Prostate gland (tissue), 2 donors: ENCODE measurements at regions of chr1 and their contacts with region 1.

Region 1: GRCh38 chr1:234722904-234723720 is 113.1 kb upstream of the IRF2BP2 start:
- DNase-seq: peak; percentile 63
- H3K4me3 ChIP-seq: no peak overlapping the region
- H3K27ac ChIP-seq: peak overlapping the region; percentile 95 to 97
- H3K4me1 ChIP-seq: peaks cover 47% of the 10 kb centered on the region
- H3K27me3 ChIP-seq: no peaks in the 10 kb centered on the region
- CTCF ChIP-seq: no peak
- POLR2A ChIP-seq: no peak

Region 2: DNA sequence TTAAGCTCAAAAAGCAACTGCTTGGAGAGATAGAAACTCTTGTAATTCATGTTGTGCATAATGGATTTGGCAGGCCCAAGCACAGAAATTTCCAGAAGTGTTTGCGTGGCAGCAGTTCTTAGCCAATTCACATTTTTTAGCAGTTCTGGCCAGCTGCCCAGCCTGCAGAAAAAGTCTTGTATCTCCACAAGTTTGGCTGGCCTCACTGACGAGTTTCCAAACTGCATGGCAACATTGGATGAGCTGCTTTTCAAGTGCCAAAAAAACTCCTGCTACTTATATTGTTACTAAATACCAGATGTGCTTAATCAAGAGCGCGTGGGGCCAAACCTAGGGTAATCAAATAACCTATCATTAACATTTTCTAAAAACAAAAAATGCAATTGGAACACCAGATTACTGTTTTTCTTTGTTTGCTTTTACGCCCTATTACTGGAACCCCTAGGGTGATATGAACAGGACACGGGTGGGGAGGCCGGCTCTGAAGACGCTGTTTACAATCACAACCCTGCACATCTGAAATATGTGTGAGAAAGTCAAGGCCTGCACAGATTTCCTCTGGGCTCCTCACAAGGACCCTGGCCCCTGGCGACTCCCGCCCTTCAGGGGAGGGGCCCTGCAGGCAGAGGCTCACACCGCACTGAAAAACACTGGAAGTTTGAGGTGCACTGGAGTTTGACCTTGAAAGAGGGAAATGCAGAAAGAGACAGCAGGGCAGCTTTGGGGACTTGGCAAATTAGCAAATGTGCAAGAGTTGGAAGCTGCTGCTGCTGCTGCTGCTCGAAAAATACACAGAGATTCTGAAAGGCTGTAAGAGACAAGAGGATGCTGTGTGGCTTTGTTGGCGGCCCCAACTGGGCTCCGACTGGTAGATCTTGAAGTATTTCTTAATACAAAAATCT is 188.9 kb before region 1 on chr1:
- intact Hi-C with region 1: loop called (anchors 5 kb)
- DNase-seq: peak; percentile 94
- H3K4me3 ChIP-seq: no peak overlapping the region
- H3K27ac ChIP-seq: peak overlapping the region; percentile 99 to 100
- H3K4me1 ChIP-seq: peaks cover 54% of the 10 kb centered on the region
- H3K27me3 ChIP-seq: no peaks in the 10 kb centered on the region
- CTCF ChIP-seq: no peak
- POLR2A ChIP-seq: no peak

Region 3: GRCh38 chr1:234862944-234863515 is 139.9 kb after region 1 on chr1:
- intact Hi-C with region 1: loop called (anchors 5 kb)
- DNase-seq: peak; percentile 86
- H3K4me3 ChIP-seq: no peak overlapping the region
- H3K27ac ChIP-seq: peak overlapping the region; percentile 64 to 73
- H3K4me1 ChIP-seq: peaks cover 9% of the 10 kb centered on the region
- H3K27me3 ChIP-seq: no peaks in the 10 kb centered on the region
- CTCF ChIP-seq: no peak
- POLR2A ChIP-seq: no peak

Region 4: DNA sequence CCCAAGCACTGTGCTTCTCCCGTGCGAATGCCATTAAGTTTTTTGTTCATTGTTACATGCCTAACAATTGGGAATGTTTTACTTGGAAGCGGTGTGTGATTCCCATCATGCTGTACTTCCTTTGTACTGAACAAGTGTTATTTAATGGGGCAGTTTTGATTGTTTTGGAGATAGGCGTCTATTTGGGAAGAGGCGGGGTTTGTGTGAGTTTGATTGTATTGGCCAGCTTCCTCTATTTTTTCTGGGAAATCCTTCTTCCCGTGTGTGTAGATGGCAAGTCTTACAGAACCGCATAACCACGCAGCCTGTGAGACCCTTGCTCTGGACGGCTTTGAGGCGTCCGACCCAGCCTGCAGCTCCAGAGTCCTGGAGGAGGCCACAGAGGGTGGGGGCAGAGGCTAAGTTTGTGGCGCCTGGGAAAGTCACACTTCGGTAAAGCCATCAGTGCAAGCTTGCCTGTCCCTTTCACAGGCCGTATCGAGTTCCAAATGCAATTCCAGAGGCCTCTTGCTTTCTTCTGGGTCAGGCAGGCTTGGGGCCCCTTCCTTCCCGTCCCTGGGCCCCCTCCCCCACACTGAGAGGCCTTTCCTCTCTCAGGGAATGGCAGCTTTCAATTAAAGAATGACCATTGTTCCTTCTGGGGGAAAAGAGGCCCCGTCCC is 195.2 kb after region 1 on chr1:
- intact Hi-C with region 1: loop called (anchors 2 kb)
- DNase-seq: peak; percentile 73
- H3K4me3 ChIP-seq: no peak overlapping the region
- H3K27ac ChIP-seq: peak overlapping the region; percentile 54 to 68
- H3K4me1 ChIP-seq: peaks cover 21% of the 10 kb centered on the region
- H3K27me3 ChIP-seq: no peaks in the 10 kb centered on the region
- CTCF ChIP-seq: no peak
- POLR2A ChIP-seq: no peak

Region 5: DNA sequence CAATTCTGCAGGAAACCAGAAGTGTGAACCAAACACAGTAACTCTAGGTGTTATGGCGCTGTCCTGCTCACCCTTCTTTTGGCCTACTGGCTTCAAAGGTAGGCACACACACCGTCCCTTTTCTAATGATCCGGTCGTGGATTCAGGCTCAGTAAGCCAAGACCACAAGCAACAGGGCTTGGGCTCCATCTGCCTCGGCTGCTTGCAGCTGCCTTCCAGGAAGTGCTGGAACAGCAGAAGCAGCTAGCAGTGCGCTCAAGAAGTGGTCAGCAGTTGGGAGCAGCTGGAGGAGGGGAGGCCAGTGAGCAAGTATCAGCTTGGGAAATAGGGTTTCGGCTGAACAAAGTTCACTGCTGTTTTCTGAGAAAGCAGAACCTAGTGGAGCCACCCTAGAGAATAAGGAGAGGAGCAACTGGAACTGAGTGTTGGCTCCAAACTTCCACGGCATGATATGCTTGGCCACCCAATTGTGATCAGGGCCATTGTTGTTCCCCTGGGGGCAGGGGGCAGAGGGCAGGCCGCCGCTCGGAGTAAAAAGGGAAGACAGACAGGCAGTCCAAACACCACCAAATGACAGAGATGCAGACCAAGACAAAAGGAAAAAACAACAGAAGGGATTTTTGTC is 232.1 kb after region 1 on chr1:
- intact Hi-C with region 1: no loop called
- DNase-seq: no peak
- H3K4me3 ChIP-seq: no peak overlapping the region
- H3K27ac ChIP-seq: no peak overlapping the region
- H3K4me1 ChIP-seq: peaks cover 3% of the 10 kb centered on the region
- H3K27me3 ChIP-seq: no peaks in the 10 kb centered on the region
- CTCF ChIP-seq: no peak
- POLR2A ChIP-seq: no peak

Region 6: DNA sequence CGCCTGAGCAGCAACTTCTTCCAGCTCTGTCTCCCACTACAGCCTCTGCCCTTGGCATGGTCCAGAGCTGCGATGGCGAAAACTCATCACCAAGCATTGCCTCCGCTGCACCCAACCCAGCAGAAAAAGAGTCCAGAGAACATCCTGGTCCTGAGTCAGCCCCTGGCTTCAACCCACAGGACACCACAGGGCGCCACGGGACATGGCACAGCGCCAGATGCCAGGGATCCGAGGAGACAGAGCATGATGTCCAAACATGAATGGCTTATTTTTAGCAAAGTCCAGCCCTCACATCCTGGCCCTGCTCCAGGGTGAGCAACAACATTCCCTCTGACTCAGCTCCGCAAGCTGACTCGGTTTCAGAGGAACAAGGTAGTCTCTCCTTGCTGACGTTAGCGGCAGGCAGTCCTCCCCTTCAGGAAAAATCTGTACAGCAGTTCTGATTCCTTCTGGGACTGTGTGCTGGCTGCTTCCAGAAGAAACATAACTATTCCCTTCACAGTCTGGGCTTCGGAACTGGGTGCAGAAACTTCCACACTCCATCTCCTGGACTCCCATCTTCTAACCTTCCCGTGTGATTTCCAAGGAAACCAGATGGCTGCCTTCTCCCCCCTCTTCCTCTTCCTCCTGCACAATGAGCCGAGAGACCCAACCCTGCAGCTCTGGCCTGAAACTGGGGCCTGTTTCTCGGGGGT is 274.2 kb after region 1 on chr1:
- intact Hi-C with region 1: loop called (anchors 2 kb)
- DNase-seq: peak; percentile 98
- H3K4me3 ChIP-seq: no peak overlapping the region
- H3K27ac ChIP-seq: peak overlapping the region; percentile 86 to 89
- H3K4me1 ChIP-seq: peaks cover 12% of the 10 kb centered on the region
- H3K27me3 ChIP-seq: no peaks in the 10 kb centered on the region
- CTCF ChIP-seq: peak in 1 of 4 experiments; percentile 17
- POLR2A ChIP-seq: peak; percentile 38